K562 (cell line): ENCODE measurements at regions of chr7 and their contacts with region 1.

Region 1: DNA sequence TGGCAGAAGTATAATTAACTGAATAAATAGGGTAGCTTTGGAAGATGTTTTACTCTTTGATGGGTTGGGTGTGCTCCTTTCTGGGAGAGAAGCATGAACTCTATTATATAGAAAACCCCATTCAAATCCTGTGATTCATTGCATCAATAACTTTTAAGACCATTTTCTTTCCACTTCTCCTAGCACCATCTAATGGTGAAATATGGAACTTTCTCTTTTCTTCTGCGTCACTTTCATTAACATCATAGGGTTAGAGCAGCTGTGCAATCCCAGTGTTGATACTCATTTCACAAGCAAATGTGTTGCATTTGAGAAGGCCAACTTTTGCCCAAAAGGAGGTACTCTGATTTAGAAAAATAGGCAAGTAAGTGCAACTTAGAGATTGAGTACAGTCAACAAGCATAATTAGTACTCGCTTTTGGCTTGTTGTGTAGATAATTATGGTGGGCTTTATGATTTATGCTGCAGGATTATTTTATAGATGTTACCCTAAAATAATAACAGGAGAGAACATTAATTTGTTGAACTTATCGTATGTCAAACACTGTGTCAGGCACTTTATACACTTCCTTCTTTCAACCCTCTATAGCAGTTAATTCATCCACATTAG is 92.9 kb downstream of the CPED1 start:
- DNase-seq: peak; percentile 44 to 85 (median 62)
- ATAC-seq: peak; percentile 24
- H3K4me3 ChIP-seq: peak overlapping the region; percentile 54
- H3K27ac ChIP-seq: peak overlapping the region; percentile 2; the same call in 1 of the 3 replicates
- H3K4me1 ChIP-seq: peaks cover 3 to 54% of the 10 kb centered on the region in 2 experiments
- H3K27me3 ChIP-seq: no peaks in the 10 kb centered on the region
- CTCF ChIP-seq: peak; percentile 58 to 84 (median 78); a peak in 5 of 6 replicates
- EP300 ChIP-seq: no peak; the same call in 1 of the 2 replicates
- POLR2A ChIP-seq: peak; percentile 88
- RAD21 ChIP-seq: peak; percentile 89 to 91

Region 2: DNA sequence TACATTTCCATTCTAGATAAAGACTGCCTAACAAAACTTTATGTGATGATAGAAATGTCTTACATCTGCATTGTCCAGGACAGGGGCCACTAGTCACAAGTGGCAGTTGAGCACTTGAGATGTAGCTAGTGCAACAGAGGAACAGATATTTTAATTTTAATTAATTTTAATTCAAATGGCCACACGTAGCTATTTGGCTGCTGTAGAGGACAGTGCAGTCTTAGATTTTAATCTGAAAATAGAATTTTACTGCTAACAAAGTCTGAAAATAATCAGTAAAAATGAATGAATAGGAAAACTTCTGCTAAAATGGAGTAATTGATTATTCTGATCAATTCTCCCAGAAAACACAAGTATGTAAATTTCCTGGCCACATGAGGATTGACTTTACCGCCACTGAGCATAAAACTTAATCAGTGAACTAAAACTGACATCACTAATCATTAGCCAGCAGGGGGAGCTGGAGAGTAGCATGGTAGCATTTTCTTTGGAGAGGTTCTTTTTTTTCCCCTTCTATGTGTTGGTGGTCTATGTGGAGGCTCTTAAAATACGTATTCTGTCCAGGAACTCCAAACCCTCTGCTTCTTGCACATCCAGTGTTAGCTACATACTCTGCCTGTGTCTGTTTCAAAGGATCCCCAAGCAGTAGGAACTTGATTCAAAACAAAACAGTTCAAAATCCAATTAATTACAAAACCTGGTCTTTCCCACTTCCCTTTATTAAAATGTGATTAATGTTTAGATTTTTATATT is 275.6 kb before region 1 on chr7:
- CTCF ChIA-PET with region 1: interaction called, 15 read pairs
- POLR2A ChIA-PET with region 1: no interaction called
- in situ Hi-C with region 1: no loop called
- intact Hi-C with region 1: no loop called
- DNase-seq: peak; percentile 73 to 86 (median 78)
- ATAC-seq: peak; percentile 89
- H3K4me3 ChIP-seq: no peak overlapping the region
- H3K27ac ChIP-seq: no peak overlapping the region
- H3K4me1 ChIP-seq: no peaks in the 10 kb centered on the region
- H3K27me3 ChIP-seq: no peaks in the 10 kb centered on the region
- CTCF ChIP-seq: peak; percentile 87 to 95 (median 91)
- EP300 ChIP-seq: no peak
- POLR2A ChIP-seq: no peak
- RAD21 ChIP-seq: peak; percentile 83 to 89

Region 3: GRCh38 chr7:120950539-120951308 is 130.7 kb before region 1 on chr7 and contains the start of gene ING3:
- CTCF ChIA-PET with region 1: no interaction called
- POLR2A ChIA-PET with region 1: interaction called, 10 read pairs
- in situ Hi-C with region 1: no loop called
- intact Hi-C with region 1: loop called (anchors 1 kb)
- DNase-seq: peak; percentile 97 to 100 (median 98)
- ATAC-seq: peak; percentile 91
- H3K4me3 ChIP-seq: peak within 1 kb of the TSS; percentile 55
- H3K27ac ChIP-seq: peak within 1 kb of the TSS; percentile 95
- H3K4me1 ChIP-seq: peaks cover 0 to 5% of the 10 kb centered on the region in 2 experiments; a peak in 2 of 5 replicates
- H3K27me3 ChIP-seq: no peaks in the 10 kb centered on the region
- CTCF ChIP-seq: no peak
- EP300 ChIP-seq: peak; percentile 65
- POLR2A ChIP-seq: peak; percentile 95
- RAD21 ChIP-seq: no peak; a peak in 1 of 4 replicates
- polyA plus RNA-seq, gene ING3: 216 to 233 TPM

Region 4: DNA sequence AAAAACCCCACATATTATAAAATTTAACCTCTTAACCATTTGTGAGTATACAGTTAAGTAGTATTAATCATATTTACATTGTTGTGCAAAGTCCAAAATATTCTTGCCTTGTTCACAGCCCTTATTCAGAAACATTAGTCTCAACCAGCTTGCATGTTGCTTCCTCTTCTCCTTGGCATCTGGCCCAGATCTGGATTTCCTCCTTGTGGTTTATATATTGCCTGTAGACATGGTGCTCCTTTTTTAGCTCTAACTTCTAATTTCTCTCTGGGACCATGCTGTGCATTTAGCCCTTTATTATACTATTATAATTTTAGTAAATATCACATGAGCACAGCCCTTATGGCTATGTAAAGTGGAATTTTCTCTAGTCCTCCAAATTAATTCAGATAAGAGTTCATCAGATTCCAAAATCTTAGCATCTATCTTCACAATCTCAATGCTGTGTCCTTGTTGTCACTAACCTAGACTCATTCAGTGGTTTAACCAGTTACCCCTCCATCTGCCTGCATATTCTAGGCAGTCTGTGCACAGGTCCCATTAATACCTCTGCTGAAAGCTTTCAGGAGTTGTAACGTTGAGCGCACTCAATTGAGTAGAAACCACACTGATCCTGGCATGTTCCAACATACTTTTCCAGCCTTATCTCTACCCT is 85.0 kb before region 1 on chr7:
- CTCF ChIA-PET with region 1: interaction called, 129 read pairs
- POLR2A ChIA-PET with region 1: interaction called, 11 read pairs
- in situ Hi-C with region 1: loop called (anchors 5 kb)
- intact Hi-C with region 1: loop called (anchors 1 kb)
- DNase-seq: peak in 2 of 4 experiments; percentile 64 to 90
- ATAC-seq: peak; percentile 13
- H3K4me3 ChIP-seq: no peak overlapping the region; the same call in 1 of the 2 replicates
- H3K27ac ChIP-seq: peak overlapping the region; percentile 30
- H3K4me1 ChIP-seq: peaks cover 15 to 44% of the 10 kb centered on the region in 2 experiments
- H3K27me3 ChIP-seq: no peaks in the 10 kb centered on the region
- CTCF ChIP-seq: 0 out of 6 replicates have a peak, but pooled peaks of 1 of the 3 experiments have one; percentile 0
- EP300 ChIP-seq: no peak
- POLR2A ChIP-seq: no peak
- RAD21 ChIP-seq: no peak

Region 5: GRCh38 chr7:121041516-121042148 is 39.8 kb before region 1 on chr7:
- CTCF ChIA-PET with region 1: no interaction called
- POLR2A ChIA-PET with region 1: interaction called, 11 read pairs
- in situ Hi-C with region 1: no loop called
- intact Hi-C with region 1: loop called (anchors 1 kb)
- DNase-seq: peak in 2 of 4 experiments; percentile 73 to 92
- ATAC-seq: 0 out of 3 replicates have a peak, but pooled peaks have one; percentile 1
- H3K4me3 ChIP-seq: no peak overlapping the region
- H3K27ac ChIP-seq: peak overlapping the region; percentile 88
- H3K4me1 ChIP-seq: peaks cover 10 to 65% of the 10 kb centered on the region in 2 experiments
- H3K27me3 ChIP-seq: no peaks in the 10 kb centered on the region
- CTCF ChIP-seq: no peak
- EP300 ChIP-seq: peak; percentile 97
- POLR2A ChIP-seq: no peak
- RAD21 ChIP-seq: 0 out of 4 replicates have a peak, but pooled peaks of 1 of the 2 experiments have one; percentile 14

Region 6: GRCh38 chr7:121049028-121049791 is 32.2 kb before region 1 on chr7:
- CTCF ChIA-PET with region 1: no interaction called
- POLR2A ChIA-PET with region 1: interaction called, 11 read pairs
- in situ Hi-C with region 1: no loop called
- intact Hi-C with region 1: loop called (anchors 1 kb)
- DNase-seq: peak in 3 of 4 experiments; percentile 40 to 82 (median 79)
- ATAC-seq: peak; percentile 71
- H3K4me3 ChIP-seq: no peak overlapping the region
- H3K27ac ChIP-seq: peak overlapping the region; percentile 69
- H3K4me1 ChIP-seq: peaks cover 23 to 59% of the 10 kb centered on the region in 2 experiments
- H3K27me3 ChIP-seq: no peaks in the 10 kb centered on the region
- CTCF ChIP-seq: no peak
- EP300 ChIP-seq: peak; percentile 90
- POLR2A ChIP-seq: no peak
- RAD21 ChIP-seq: peak; percentile 5 to 31; a peak in 2 of 4 replicates

Region 7: DNA sequence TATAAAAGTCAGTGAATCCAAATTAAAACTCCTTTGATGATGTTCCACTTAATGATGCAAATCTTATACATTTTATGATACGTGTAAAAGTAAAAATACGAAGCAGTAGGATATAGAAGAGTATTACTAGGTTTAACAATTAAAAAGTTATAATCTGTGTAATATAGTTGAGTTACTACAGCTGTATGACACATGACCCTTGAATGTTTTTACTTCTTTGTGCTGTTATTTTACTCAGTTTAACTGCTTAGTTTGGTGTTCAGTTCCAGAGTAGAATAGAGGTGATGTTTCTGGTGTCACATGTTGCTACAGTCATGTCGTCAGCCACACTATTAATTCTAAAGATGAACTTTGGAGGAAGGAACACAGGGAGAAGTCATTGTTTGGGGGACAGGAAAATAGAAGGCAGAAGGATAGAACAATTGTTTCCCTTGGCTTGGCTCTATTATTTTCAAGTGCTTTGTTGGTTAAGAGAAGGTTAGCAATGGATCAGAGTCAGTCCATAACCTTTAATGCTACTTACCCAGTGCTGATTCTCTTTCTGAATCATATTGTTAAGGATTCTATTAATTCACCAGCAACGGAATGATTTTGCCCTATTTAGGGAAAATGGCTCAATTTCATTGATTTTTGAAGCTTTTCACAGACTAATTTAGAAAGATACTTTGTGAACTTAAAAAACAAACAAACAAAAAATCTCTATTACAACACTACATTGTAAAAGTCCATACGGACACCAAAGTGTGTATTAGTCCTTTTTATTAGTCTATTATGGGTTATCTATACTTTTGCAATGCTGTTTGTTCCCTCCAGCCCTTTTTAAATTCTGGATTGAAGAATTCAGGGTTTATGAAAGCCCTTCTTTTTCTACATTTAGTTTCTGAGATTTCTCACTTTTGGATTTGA is 19.5 kb before region 1 on chr7:
- CTCF ChIA-PET with region 1: no interaction called
- POLR2A ChIA-PET with region 1: interaction called, 19 read pairs
- in situ Hi-C with region 1: no loop called
- intact Hi-C with region 1: no loop called
- DNase-seq: peak in 1 of 4 experiments; percentile 1
- ATAC-seq: no peak; the same call in 2 of the 3 replicates
- H3K4me3 ChIP-seq: no peak overlapping the region
- H3K27ac ChIP-seq: no peak overlapping the region
- H3K4me1 ChIP-seq: no peaks in the 10 kb centered on the region
- H3K27me3 ChIP-seq: no peaks in the 10 kb centered on the region
- CTCF ChIP-seq: no peak
- EP300 ChIP-seq: no peak
- POLR2A ChIP-seq: no peak
- RAD21 ChIP-seq: no peak